ENCODE measurements at regions of chr17 and their contacts with region 1.

Region 1: DNA sequence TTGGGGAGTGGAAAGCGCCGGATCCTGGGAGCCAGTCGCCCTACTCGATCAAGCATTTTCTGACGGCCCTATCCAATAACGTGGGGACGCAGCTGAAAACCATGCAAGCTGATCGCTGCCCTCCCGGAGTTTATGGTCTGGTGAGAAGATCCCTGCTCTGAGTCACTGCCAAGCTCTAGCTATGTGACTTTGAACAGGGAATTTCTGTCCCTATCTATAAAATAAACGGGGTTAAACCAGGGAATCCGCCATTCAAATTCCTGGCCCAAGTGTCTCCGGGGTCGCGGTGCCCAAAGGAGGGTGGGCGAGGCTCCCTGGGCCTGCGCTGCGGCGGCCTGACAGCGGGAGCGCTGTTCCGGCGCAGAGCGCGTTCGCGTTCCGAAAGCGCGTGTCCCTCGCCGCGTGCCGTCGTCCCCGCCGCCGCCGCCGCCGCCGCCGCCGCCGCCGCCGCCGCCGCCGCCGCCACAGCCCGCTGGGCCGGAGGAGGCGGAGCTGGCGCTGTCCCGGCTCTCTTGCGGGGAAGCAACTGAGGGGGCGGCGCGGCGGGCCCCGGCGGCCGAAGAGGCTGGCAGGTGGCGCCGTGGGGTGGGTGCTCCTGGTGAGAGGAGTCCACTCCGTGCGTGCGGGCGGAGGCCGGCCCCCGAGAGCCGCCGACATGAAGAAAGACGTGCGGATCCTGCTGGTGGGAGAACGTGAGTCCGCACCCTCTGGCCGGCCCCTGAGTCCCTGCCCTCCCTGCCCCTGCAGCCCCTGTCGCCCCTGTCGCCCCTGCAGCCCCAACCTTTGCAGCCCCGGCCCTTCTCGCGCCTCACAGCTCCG is at the start of gene RHOT1:
- DNase-seq: peak; percentile 97

Region 2: GRCh38 chr17:32006957-32007462 is 135.2 kb before region 1 on chr17 and contains the start of gene LRRC37B:
- in situ Hi-C with region 1: loop called (anchors 25 kb)
- DNase-seq: peak; percentile 85

Region 3: GRCh38 chr17:32099686-32100085 is 42.6 kb before region 1 on chr17:
- in situ Hi-C with region 1: no loop called
- DNase-seq: no peak